ENCODE measurements at regions of chr16 and their contacts with region 1.

Region 1: GRCh38 chr16:84397090-84397489 is 28.8 kb downstream of the ATP2C2 start:
- DNase-seq: no peak
- ATAC-seq: no peak
- H3K4me3 ChIP-seq: no peak overlapping the region
- H3K4me3 Mint-ChIP-seq: no peak overlapping the region
- H3K27ac ChIP-seq: no peak overlapping the region
- H3K27ac Mint-ChIP-seq: no peak overlapping the region
- H3K4me1 ChIP-seq: no peaks in the 10 kb centered on the region
- H3K4me1 Mint-ChIP-seq: no peaks in the 10 kb centered on the region
- H3K27me3 ChIP-seq: peaks cover 0 to 32% of the 10 kb centered on the region in 2 experiments
- H3K27me3 Mint-ChIP-seq: peaks cover 23 to 29% of the 10 kb centered on the region in 2 donors

Region 2: DNA sequence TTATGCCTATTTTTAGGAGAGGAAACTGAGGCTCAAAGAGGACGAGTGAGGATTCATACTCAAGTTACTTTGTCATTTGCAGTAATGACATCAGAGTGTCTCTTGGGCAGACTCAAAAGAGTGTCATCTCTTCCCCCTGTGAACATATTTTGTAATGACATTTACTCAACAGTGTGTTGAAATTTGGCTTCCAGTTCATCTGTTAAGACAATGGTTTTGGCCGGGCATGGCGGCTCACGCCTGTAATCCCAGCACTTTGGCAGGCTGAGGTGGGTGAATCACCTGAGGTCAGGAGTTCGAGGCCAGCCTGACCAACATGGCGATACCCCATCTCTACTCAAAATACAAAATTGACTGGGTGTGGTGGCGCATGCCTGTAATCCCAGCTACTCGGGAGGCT is 73.5 kb before region 1 on chr16:
- CTCF ChIA-PET with region 1: no interaction called
- POLR2A ChIA-PET with region 1: no interaction called
- DNase-seq: no peak
- ATAC-seq: no peak
- H3K4me3 ChIP-seq: no peak overlapping the region
- H3K4me3 Mint-ChIP-seq: no peak overlapping the region
- H3K27ac ChIP-seq: no peak overlapping the region
- H3K27ac Mint-ChIP-seq: no peak overlapping the region
- H3K4me1 ChIP-seq: no peaks in the 10 kb centered on the region
- H3K4me1 Mint-ChIP-seq: no peaks in the 10 kb centered on the region
- H3K27me3 ChIP-seq: peaks cover 0 to 23% of the 10 kb centered on the region in 2 experiments
- H3K27me3 Mint-ChIP-seq: peaks cover 0 to 7% of the 10 kb centered on the region in 2 donors

Region 3: DNA sequence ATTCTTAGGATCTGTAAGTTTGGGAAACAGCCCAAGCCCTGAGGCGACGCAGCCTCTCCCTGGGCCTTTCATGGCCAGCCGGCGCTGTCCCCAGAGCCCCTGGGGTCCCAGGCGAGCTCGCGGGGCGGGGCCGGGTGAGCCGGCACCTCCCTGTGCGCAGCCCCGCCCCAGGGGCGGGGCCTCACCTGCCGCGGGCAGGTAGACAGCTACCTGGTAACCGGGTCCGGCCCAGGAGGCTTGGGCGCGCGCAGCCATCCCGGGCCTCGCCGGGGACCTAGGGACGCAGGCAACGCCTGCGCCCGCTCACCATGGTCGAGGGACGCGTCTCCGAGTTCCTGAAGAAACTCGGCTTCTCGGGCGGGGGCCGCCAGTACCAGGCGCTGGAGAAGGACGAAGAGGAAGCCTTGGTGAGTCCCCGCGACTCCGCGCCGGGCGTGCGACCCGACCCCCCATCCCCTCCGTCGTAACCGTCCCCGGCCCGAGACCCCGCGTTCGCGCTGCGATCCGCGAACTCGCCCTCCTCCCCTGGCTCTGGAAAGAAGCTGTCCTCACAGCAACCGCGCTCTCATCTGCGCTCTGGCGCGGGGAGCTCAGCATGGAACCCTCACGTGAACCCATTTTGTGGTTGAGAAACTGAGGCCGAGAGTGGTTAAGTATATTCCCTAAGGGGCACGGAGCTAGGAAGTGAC is 28.6 kb before region 1 on chr16 and contains the start of gene ATP2C2:
- CTCF ChIA-PET with region 1: no interaction called
- POLR2A ChIA-PET with region 1: interaction called in 1 of 2 experiments, 11 read pairs
- DNase-seq: no peak
- ATAC-seq: no peak
- H3K4me3 ChIP-seq: peak within 1 kb of the TSS in 1 of 2 donors; percentile 47
- H3K4me3 Mint-ChIP-seq: peak within 1 kb of the TSS in 2 of 3 donors; percentile 32 to 45
- H3K27ac ChIP-seq: no peak within 1 kb of the TSS
- H3K27ac Mint-ChIP-seq: no peak within 1 kb of the TSS
- H3K4me1 ChIP-seq: peaks cover 3 to 8% of the 10 kb centered on the region in 2 experiments
- H3K4me1 Mint-ChIP-seq: peaks cover 10 to 18% (median 17%) of the 10 kb centered on the region in 3 donors
- H3K27me3 ChIP-seq: peaks cover 3 to 60% of the 10 kb centered on the region in 2 experiments
- H3K27me3 Mint-ChIP-seq: peaks cover 41 to 56% of the 10 kb centered on the region in 2 donors
- total RNA-seq, gene ATP2C2: not detected